ENCODE measurements at regions of chr10 and their contacts with region 1.

Region 1: GRCh38 chr10:119596537-119597404 is at the start of gene TIAL1:
- DNase-seq: peak; percentile 84 to 98 (median 92)
- ATAC-seq: peak; percentile 83
- H3K4me3 ChIP-seq: peak within 1 kb of the TSS; percentile 98 to 99
- H3K4me3 Mint-ChIP-seq: peak within 1 kb of the TSS; percentile 99
- H3K27ac ChIP-seq: peak within 1 kb of the TSS; percentile 79 to 96
- H3K27ac Mint-ChIP-seq: peak within 1 kb of the TSS; percentile 96
- H3K4me1 ChIP-seq: peaks cover 43% of the 10 kb centered on the region
- H3K4me1 Mint-ChIP-seq: peaks cover 48% of the 10 kb centered on the region
- H3K27me3 ChIP-seq: no peaks in the 10 kb centered on the region
- H3K27me3 Mint-ChIP-seq: no peaks in the 10 kb centered on the region
- CTCF ChIP-seq: no peak
- total RNA-seq, gene TIAL1: 159 to 172 TPM

Region 2: DNA sequence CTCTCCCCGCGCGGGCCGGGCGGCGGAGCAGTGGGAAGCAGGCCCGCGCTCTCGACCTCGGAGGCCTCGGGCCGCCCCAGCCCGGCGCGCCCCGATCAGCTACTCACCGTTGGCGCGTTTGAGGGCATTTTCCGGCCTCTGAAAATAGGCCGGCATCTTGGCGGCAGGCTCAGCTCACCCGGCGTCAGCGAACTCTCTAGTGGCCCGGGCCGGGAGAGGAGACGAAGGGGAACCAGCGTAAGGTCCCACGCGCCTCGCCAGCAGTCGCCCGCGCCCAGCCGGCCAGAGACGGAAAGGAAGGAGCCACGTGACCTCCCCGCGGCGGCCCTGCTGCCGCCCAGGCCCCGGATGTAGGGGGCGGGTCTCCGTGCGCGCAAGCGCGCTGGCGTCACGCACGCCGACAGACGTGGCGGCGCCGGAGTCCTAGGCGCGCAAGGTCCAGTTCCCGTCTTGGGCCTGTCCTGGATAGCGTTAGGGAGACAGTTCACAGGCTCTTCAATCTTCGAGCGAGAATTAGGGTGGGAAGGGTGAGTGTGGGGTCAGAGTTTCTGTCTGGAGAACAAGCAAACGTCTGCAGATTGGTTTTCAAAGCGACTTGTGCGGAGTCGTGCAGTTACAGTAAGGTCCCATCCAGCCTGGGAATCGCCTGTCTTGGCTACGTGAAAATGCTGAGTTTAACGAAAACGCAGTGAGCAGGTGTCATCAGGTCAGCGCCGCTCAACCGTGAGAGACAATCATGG is 516.1 kb before region 1 on chr10 and contains the start of gene EIF3A:
- CTCF ChIA-PET with region 1: no interaction called
- POLR2A ChIA-PET with region 1: no interaction called
- intact Hi-C with region 1: loop called in 1 of 2 experiments (anchors 5 kb)
- DNase-seq: peak; percentile 85 to 95 (median 91)
- ATAC-seq: peak; percentile 72
- H3K4me3 ChIP-seq: peak within 1 kb of the TSS; percentile 64 to 99
- H3K4me3 Mint-ChIP-seq: peak within 1 kb of the TSS; percentile 94
- H3K27ac ChIP-seq: peak within 1 kb of the TSS; percentile 82 to 96
- H3K27ac Mint-ChIP-seq: peak within 1 kb of the TSS; percentile 97
- H3K4me1 ChIP-seq: peaks cover 24% of the 10 kb centered on the region
- H3K4me1 Mint-ChIP-seq: peaks cover 45% of the 10 kb centered on the region
- H3K27me3 ChIP-seq: no peaks in the 10 kb centered on the region
- H3K27me3 Mint-ChIP-seq: no peaks in the 10 kb centered on the region
- CTCF ChIP-seq: no peak
- total RNA-seq, gene EIF3A: 121 to 128 TPM

Region 3: GRCh38 chr10:119207367-119207668 is 389.5 kb before region 1 on chr10 and contains the start of gene GRK5:
- CTCF ChIA-PET with region 1: interaction called, 3 read pairs
- POLR2A ChIA-PET with region 1: no interaction called
- intact Hi-C with region 1: loop called (anchors 2 kb)
- DNase-seq: peak; percentile 90 to 99 (median 96)
- ATAC-seq: peak; percentile 81
- H3K4me3 ChIP-seq: peak within 1 kb of the TSS; percentile 62 to 77
- H3K4me3 Mint-ChIP-seq: peak within 1 kb of the TSS; percentile 99
- H3K27ac ChIP-seq: peak within 1 kb of the TSS; percentile 57 to 74
- H3K27ac Mint-ChIP-seq: peak within 1 kb of the TSS; percentile 95
- H3K4me1 ChIP-seq: peaks cover 36% of the 10 kb centered on the region
- H3K4me1 Mint-ChIP-seq: peaks cover 44% of the 10 kb centered on the region
- H3K27me3 ChIP-seq: no peaks in the 10 kb centered on the region
- H3K27me3 Mint-ChIP-seq: no peaks in the 10 kb centered on the region
- CTCF ChIP-seq: no peak
- total RNA-seq, gene GRK5: 15.6 to 16.2 TPM

Region 4: GRCh38 chr10:119542988-119543813 is 53.6 kb before region 1 on chr10:
- CTCF ChIA-PET with region 1: interaction called, 3 read pairs
- POLR2A ChIA-PET with region 1: interaction called, 5 read pairs
- intact Hi-C with region 1: loop called (anchors 1 kb)
- DNase-seq: peak; percentile 34 to 83 (median 68)
- ATAC-seq: peak; percentile 43
- H3K4me3 ChIP-seq: peak overlapping the region; percentile 86 to 90
- H3K4me3 Mint-ChIP-seq: peak overlapping the region; percentile 95
- H3K27ac ChIP-seq: peak overlapping the region in 1 of 2 experiments; percentile 83
- H3K27ac Mint-ChIP-seq: peak overlapping the region; percentile 95
- H3K4me1 ChIP-seq: peaks cover 18% of the 10 kb centered on the region
- H3K4me1 Mint-ChIP-seq: peaks cover 42% of the 10 kb centered on the region
- H3K27me3 ChIP-seq: no peaks in the 10 kb centered on the region
- H3K27me3 Mint-ChIP-seq: no peaks in the 10 kb centered on the region
- CTCF ChIP-seq: peak; percentile 72

Region 5: GRCh38 chr10:119555178-119555784 is 41.5 kb before region 1 on chr10:
- CTCF ChIA-PET with region 1: no interaction called
- POLR2A ChIA-PET with region 1: no interaction called
- intact Hi-C with region 1: no loop called
- DNase-seq: no peak
- ATAC-seq: no peak
- H3K4me3 ChIP-seq: no peak overlapping the region
- H3K4me3 Mint-ChIP-seq: no peak overlapping the region
- H3K27ac ChIP-seq: no peak overlapping the region
- H3K27ac Mint-ChIP-seq: no peak overlapping the region
- H3K4me1 ChIP-seq: no peaks in the 10 kb centered on the region
- H3K4me1 Mint-ChIP-seq: no peaks in the 10 kb centered on the region
- H3K27me3 ChIP-seq: no peaks in the 10 kb centered on the region
- H3K27me3 Mint-ChIP-seq: no peaks in the 10 kb centered on the region
- CTCF ChIP-seq: no peak

Region 6: GRCh38 chr10:119725828-119726675 is 129.3 kb after region 1 on chr10 and contains the start of gene INPP5F:
- CTCF ChIA-PET with region 1: no interaction called
- POLR2A ChIA-PET with region 1: interaction called, 3 read pairs
- intact Hi-C with region 1: loop called (anchors 1 to 2 kb)
- DNase-seq: peak; percentile 95 to 100 (median 98)
- ATAC-seq: peak; percentile 95
- H3K4me3 ChIP-seq: peak within 1 kb of the TSS; percentile 64 to 81
- H3K4me3 Mint-ChIP-seq: peak within 1 kb of the TSS; percentile 90
- H3K27ac ChIP-seq: peak within 1 kb of the TSS; percentile 33 to 44
- H3K27ac Mint-ChIP-seq: peak within 1 kb of the TSS; percentile 81
- H3K4me1 ChIP-seq: peaks cover 16% of the 10 kb centered on the region
- H3K4me1 Mint-ChIP-seq: peaks cover 27% of the 10 kb centered on the region
- H3K27me3 ChIP-seq: no peaks in the 10 kb centered on the region
- H3K27me3 Mint-ChIP-seq: no peaks in the 10 kb centered on the region
- CTCF ChIP-seq: no peak
- total RNA-seq, gene INPP5F: 3.8 to 6.5 TPM

Region 7: GRCh38 chr10:119892188-119893065 is 295.7 kb after region 1 on chr10 and contains the start of gene SEC23IP:
- CTCF ChIA-PET with region 1: no interaction called
- POLR2A ChIA-PET with region 1: no interaction called
- intact Hi-C with region 1: loop called in 1 of 2 experiments (anchors 1 kb)
- DNase-seq: peak; percentile 78 to 95 (median 89)
- ATAC-seq: peak; percentile 98
- H3K4me3 ChIP-seq: peak within 1 kb of the TSS; percentile 97 to 98
- H3K4me3 Mint-ChIP-seq: peak within 1 kb of the TSS; percentile 98
- H3K27ac ChIP-seq: peak within 1 kb of the TSS; percentile 84 to 96
- H3K27ac Mint-ChIP-seq: peak within 1 kb of the TSS; percentile 99
- H3K4me1 ChIP-seq: peaks cover 10% of the 10 kb centered on the region
- H3K4me1 Mint-ChIP-seq: peaks cover 46% of the 10 kb centered on the region
- H3K27me3 ChIP-seq: no peaks in the 10 kb centered on the region
- H3K27me3 Mint-ChIP-seq: no peaks in the 10 kb centered on the region
- CTCF ChIP-seq: no peak
- total RNA-seq, gene SEC23IP: 16.2 to 19.8 TPM

Region 8: GRCh38 chr10:120493411-120494312 is 896.9 kb after region 1 on chr10:
- CTCF ChIA-PET with region 1: no interaction called
- POLR2A ChIA-PET with region 1: no interaction called
- intact Hi-C with region 1: no loop called
- DNase-seq: no peak
- ATAC-seq: no peak
- H3K4me3 ChIP-seq: no peak overlapping the region
- H3K4me3 Mint-ChIP-seq: no peak overlapping the region
- H3K27ac ChIP-seq: no peak overlapping the region
- H3K27ac Mint-ChIP-seq: no peak overlapping the region
- H3K4me1 ChIP-seq: no peaks in the 10 kb centered on the region
- H3K4me1 Mint-ChIP-seq: no peaks in the 10 kb centered on the region
- H3K27me3 ChIP-seq: no peaks in the 10 kb centered on the region
- H3K27me3 Mint-ChIP-seq: peaks cover 5% of the 10 kb centered on the region
- CTCF ChIP-seq: no peak